A549 (cell line): ENCODE measurements at regions of chr1 and their contacts with region 1.

Region 1: GRCh38 chr1:200258447-200259375 is 151.1 kb downstream of the ZNF281 start:
- DNase-seq: peak; percentile 53 to 66
- ATAC-seq: peak; percentile 89 to 96
- H3K4me3 ChIP-seq: no peak overlapping the region
- H3K27ac ChIP-seq: peak overlapping the region in 1 of 2 experiments; percentile 29; a peak in 1 of 6 replicates
- H3K4me1 ChIP-seq: no peaks in the 10 kb centered on the region
- CTCF ChIP-seq: peak; percentile 59
- EP300 ChIP-seq: no peak
- POLR2A ChIP-seq: no peak
- RAD21 ChIP-seq: peak; percentile 45 to 67; a peak in 4 of 5 replicates

Region 2: DNA sequence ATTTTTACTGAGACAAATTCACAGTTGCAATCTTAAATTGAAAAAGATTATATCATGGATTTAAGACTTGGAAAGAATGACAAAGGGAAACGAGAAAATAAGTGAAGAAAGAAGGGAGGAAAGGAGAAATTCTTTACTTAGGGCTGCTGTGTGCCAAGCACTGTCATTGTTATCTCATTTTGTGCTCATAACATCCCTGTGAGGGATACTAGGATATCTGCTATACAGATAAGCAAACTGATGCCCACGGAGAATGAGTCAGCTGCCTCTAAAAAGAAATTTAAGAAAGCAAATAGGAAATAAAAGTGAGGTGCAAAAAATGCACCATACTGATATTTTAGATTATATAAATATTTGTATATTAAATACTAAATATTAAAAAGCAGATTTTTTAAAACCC is 414.9 kb before region 1 on chr1:
- CTCF ChIA-PET with region 1: no interaction called
- POLR2A ChIA-PET with region 1: no interaction called
- DNase-seq: peak in 1 of 2 experiments; percentile 19
- ATAC-seq: peak in 1 of 2 experiments; percentile 53; a peak in 2 of 6 replicates
- H3K4me3 ChIP-seq: no peak overlapping the region
- H3K27ac ChIP-seq: peak overlapping the region in 1 of 2 experiments; percentile 43; a peak in 2 of 6 replicates
- H3K4me1 ChIP-seq: peaks cover 16% of the 10 kb centered on the region; the same call in 2 of the 3 replicates
- CTCF ChIP-seq: no peak
- EP300 ChIP-seq: no peak
- POLR2A ChIP-seq: no peak
- RAD21 ChIP-seq: no peak

Region 3: DNA sequence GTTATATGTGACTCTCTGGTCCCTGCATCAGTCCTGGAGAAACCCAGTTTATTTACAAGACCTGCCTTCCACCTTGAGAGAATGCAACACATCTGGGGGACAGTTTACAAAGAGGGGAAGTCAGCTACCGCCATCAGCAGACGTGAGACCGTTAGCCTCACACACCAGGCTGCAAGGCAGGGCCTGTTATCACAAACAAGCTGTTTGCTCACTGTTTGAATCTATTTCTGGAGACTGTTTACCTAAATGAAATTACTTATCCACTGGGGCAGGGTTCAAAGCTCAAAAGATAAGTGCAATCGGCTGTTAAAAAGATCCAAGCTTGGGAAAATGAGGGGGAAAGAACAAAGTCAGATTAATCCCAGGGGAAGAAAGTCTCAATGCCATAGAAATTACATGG is 16.7 kb after region 1 on chr1:
- CTCF ChIA-PET with region 1: interaction called, 12 read pairs
- POLR2A ChIA-PET with region 1: no interaction called
- DNase-seq: no peak
- ATAC-seq: no peak; a peak in 1 of 6 replicates
- H3K4me3 ChIP-seq: no peak overlapping the region
- H3K27ac ChIP-seq: no peak overlapping the region
- H3K4me1 ChIP-seq: peaks cover 9% of the 10 kb centered on the region; the same call in 1 of the 3 replicates
- CTCF ChIP-seq: no peak
- EP300 ChIP-seq: no peak
- POLR2A ChIP-seq: no peak
- RAD21 ChIP-seq: no peak